AG04449 (cell line): ENCODE measurements at regions of chr9 and their contacts with region 1.

Region 1: GRCh38 chr9:22452415-22453010 is 5.9 kb downstream of the DMRTA1 start:
- DNase-seq: no peak
- H3K4me3 ChIP-seq: no peak overlapping the region
- CTCF ChIP-seq: peak; percentile 48

Region 2: GRCh38 chr9:22244141-22245011 is 208.1 kb before region 1 on chr9:
- CTCF ChIA-PET with region 1: interaction called, 30 read pairs
- POLR2A ChIA-PET with region 1: no interaction called
- DNase-seq: no peak
- H3K4me3 ChIP-seq: no peak overlapping the region
- CTCF ChIP-seq: peak; percentile 57

Region 3: DNA sequence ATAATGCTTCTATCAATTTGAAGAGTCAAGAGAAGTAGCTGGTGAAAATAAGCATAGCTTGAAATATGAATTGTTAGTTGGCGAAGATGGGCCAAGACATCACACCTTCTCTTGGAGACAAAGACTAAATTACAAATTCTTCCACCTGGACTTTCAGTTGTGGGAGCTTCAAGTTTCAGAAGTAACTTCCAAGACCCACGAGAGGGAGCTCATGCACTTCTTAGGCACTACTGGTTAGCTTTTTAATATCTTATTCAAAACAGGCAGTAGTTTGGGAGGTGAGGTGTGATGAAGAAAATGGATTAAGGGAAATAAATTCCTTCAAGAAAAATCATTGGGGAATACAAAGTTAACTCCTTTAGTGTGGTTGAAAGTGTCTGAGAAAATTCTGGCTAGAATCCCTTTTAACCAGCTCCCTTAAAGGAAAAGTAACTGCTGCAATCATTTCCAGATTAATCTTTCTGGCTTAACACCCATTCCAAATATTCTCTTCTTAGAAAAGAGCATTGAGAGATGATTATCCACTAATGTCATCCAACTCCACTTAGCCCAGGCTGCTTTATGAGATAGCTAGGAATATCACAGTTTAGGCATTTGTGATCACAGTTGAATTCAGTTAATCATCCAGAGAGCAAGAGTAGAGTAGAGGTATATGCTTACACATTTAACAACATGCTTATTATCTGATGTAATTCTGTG is 145.4 kb before region 1 on chr9:
- CTCF ChIA-PET with region 1: interaction called, 68 read pairs
- POLR2A ChIA-PET with region 1: no interaction called
- DNase-seq: peak; percentile 7
- H3K4me3 ChIP-seq: no peak overlapping the region
- CTCF ChIP-seq: peak; percentile 41

Region 4: DNA sequence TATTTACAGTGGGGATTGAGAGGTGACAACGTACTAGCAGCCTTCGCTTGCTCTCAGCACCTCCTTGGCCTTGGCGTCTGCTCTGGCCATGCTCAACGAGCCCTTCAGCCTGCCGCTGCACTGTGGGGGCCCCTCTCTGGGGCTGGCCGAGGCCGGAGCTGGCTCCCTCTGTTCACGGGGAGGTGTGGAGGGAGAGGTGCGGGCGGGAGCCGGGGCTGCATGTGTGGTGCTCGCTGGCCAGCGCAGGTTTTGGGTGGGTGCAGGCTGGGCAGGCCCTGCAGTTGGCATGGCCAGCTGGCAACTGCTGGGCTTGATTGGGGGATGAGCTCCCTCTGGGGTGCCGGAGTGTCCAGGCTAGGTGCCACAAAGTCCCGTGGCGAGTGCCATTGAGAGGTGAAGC is 11.7 kb before region 1 on chr9:
- CTCF ChIA-PET with region 1: interaction called, 13 read pairs
- POLR2A ChIA-PET with region 1: no interaction called
- DNase-seq: no peak
- H3K4me3 ChIP-seq: no peak overlapping the region
- CTCF ChIP-seq: no peak